PC-3 (cell line): ENCODE measurements at regions of chr2 and their contacts with region 1.

Region 1: GRCh38 chr2:70142590-70143313 is 48.1 kb downstream of the C2orf42 start:
- DNase-seq: peak; percentile 100
- ATAC-seq: peak; percentile 60
- H3K4me3 ChIP-seq: peak overlapping the region; percentile 67
- H3K27ac ChIP-seq: peak overlapping the region; percentile 87
- H3K4me1 ChIP-seq: peaks cover 23% of the 10 kb centered on the region
- H3K27me3 ChIP-seq: no peaks in the 10 kb centered on the region
- CTCF ChIP-seq: peak; percentile 89

Region 2: GRCh38 chr2:69946351-69947077 is 196.2 kb before region 1 on chr2:
- CTCF ChIA-PET with region 1: no interaction called
- POLR2A ChIA-PET with region 1: no interaction called
- intact Hi-C with region 1: loop called (anchors 1 kb)
- DNase-seq: peak; percentile 95
- ATAC-seq: peak; percentile 85
- H3K4me3 ChIP-seq: peak overlapping the region; percentile 41
- H3K27ac ChIP-seq: peak overlapping the region; percentile 98
- H3K4me1 ChIP-seq: peaks cover 53% of the 10 kb centered on the region
- H3K27me3 ChIP-seq: no peaks in the 10 kb centered on the region
- CTCF ChIP-seq: no peak

Region 3: GRCh38 chr2:70086838-70087701 is 55.7 kb before region 1 on chr2 and contains the start of gene PCBP1:
- CTCF ChIA-PET with region 1: no interaction called
- POLR2A ChIA-PET with region 1: interaction called, 3 read pairs
- intact Hi-C with region 1: loop called (anchors 1 kb)
- DNase-seq: peak; percentile 87
- ATAC-seq: peak; percentile 21
- H3K4me3 ChIP-seq: peak within 1 kb of the TSS; percentile 95
- H3K27ac ChIP-seq: peak within 1 kb of the TSS; percentile 100
- H3K4me1 ChIP-seq: peaks cover 55% of the 10 kb centered on the region
- H3K27me3 ChIP-seq: no peaks in the 10 kb centered on the region
- CTCF ChIP-seq: no peak
- total RNA-seq, gene PCBP1: 39.2 and 59.7 TPM in 2 replicates

Region 4: DNA sequence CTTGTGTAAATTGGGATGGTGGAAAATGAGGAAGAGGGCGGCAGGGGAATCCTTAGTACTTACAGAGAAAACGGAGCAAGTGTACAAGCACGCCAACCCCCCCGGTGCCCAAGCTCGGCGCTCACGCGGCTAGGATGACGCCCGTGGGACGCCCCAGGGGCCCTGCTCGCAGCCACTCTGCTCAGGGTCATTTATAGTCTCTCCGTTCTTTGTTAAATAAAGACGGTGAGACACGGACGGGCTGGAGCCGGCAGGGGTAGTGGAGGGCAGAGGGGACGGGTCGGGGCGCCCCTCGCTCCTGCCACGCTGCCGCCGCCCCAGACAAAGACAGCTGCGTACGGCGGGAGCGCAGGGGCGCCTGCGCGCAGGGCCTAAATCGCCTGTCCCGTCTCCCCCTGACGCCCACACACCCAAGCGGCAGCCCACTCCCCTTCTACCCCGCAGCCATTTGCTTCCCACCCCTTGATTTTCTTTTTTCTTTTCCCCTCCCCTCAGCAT is 17.7 kb before region 1 on chr2:
- CTCF ChIA-PET with region 1: no interaction called
- POLR2A ChIA-PET with region 1: no interaction called
- intact Hi-C with region 1: loop called (anchors 1 kb)
- DNase-seq: peak; percentile 38
- ATAC-seq: peak; percentile 66
- H3K4me3 ChIP-seq: peak overlapping the region; percentile 78
- H3K27ac ChIP-seq: peak overlapping the region; percentile 72
- H3K4me1 ChIP-seq: peaks cover 21% of the 10 kb centered on the region
- H3K27me3 ChIP-seq: no peaks in the 10 kb centered on the region
- CTCF ChIP-seq: no peak

Region 5: GRCh38 chr2:70190418-70191243 is 47.9 kb after region 1 on chr2 and contains the start of gene C2orf42:
- CTCF ChIA-PET with region 1: interaction called, 10 read pairs
- POLR2A ChIA-PET with region 1: interaction called, 4 read pairs
- intact Hi-C with region 1: no loop called
- DNase-seq: peak; percentile 97
- ATAC-seq: peak; percentile 91
- H3K4me3 ChIP-seq: peak within 1 kb of the TSS; percentile 79
- H3K27ac ChIP-seq: peak within 1 kb of the TSS; percentile 77
- H3K4me1 ChIP-seq: peaks cover 15% of the 10 kb centered on the region
- H3K27me3 ChIP-seq: no peaks in the 10 kb centered on the region
- CTCF ChIP-seq: no peak
- total RNA-seq, gene C2orf42: 17.1 and 21.1 TPM in 2 replicates